ENCODE measurements at regions of chr13 and their contacts with region 1.

Region 1: GRCh38 chr13:31044377-31045285 is 112.2 kb downstream of the TEX26 start:
- DNase-seq: no peak
- H3K4me3 ChIP-seq: no peak overlapping the region
- CTCF ChIP-seq: peak; percentile 94

Region 2: DNA sequence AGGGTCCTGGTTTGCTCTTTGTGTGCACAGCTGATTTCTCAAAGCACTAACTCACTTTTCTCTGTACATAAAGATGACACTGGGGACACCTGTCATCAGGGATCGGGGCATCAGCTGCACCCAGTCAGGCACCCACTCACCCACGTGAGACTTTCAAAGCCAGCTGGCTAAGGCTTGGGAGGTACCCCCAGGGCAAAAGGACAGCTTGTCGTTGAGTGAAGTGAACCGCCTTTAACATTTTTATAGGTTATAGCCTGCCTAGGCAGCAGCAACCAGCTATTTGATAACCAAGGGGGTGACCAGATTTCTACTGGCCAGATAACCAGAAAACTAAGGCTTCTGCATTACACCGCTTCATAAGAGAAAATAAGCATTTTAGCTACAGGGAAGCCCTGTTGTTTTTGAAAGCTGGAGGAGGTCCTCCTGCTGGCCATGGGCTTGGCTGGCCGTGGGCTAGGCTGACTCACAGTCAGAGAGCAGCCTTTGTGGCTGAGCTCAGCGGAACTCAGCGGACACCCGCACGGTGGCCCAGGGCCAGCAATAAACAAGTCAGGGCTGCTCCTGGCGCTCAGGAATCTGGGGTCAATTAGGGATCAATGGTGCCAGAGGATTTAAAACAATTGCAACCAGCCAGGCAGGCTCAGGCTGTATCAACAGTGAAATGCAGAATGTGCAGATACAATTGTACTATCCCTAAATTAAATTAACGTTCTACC is 252.2 kb before region 1 on chr13:
- CTCF ChIA-PET with region 1: interaction called, 10 read pairs
- POLR2A ChIA-PET with region 1: no interaction called
- DNase-seq: peak; percentile 69
- H3K4me3 ChIP-seq: no peak overlapping the region
- CTCF ChIP-seq: peak; percentile 68

Region 3: DNA sequence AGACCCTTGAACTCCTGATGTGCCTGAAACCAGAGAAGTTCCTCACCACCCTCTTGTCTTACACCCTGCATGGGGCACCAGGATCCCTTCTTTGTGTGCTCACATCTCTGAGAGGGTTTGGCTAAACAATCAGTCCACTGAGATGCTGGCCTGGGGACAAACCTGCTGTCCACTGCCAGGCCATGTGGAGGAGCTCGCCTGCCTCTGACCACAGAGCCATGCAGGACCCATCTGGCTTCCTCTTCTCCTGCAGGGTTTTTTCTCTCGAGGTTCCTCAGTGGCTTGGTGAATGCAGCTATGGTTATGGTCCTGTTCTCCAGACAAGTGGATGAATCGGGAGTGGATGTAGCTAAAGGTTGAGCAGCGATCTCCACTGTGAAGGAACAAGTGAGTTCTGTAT is 187.6 kb before region 1 on chr13:
- CTCF ChIA-PET with region 1: interaction called, 10 read pairs
- POLR2A ChIA-PET with region 1: no interaction called
- DNase-seq: no peak
- H3K4me3 ChIP-seq: no peak overlapping the region
- CTCF ChIP-seq: peak; percentile 16

Region 4: DNA sequence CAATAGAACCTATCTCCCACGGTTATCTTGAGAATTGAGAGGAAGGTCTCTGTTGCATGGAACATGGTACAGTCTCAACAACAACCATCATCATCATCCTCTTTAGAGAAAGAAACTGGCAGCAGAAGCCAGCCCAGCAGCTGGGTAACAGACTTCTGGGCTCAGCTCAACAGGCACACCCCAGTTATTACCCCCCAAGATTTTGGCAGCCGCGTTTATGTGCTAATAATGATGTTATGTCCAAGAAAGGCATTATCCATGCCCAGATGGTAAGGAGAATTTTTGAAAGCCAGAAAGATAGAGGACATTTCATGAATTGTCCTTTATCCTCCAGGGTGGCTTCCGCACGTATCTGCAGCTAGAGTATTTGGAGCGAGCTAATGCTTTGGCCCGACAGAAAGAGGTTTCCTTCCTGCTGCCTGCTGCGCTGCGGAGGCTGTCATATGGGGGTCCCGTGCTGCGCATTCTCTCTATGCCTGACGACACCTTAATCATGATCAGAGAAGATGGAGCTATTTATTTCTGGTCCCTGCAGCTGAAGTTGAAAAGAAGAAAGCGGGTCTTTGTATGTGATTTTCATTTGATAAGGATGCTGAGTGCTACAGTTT is 22.2 kb before region 1 on chr13:
- CTCF ChIA-PET with region 1: interaction called, 87 read pairs
- POLR2A ChIA-PET with region 1: no interaction called
- DNase-seq: no peak
- H3K4me3 ChIP-seq: no peak overlapping the region
- CTCF ChIP-seq: no peak

Region 5: GRCh38 chr13:31064636-31065035 is 20.0 kb after region 1 on chr13:
- CTCF ChIA-PET with region 1: interaction called, 10 read pairs
- POLR2A ChIA-PET with region 1: no interaction called
- DNase-seq: no peak
- H3K4me3 ChIP-seq: no peak overlapping the region
- CTCF ChIP-seq: no peak

Region 6: GRCh38 chr13:31267126-31267784 is 222.6 kb after region 1 on chr13:
- CTCF ChIA-PET with region 1: no interaction called
- POLR2A ChIA-PET with region 1: no interaction called
- DNase-seq: no peak
- H3K4me3 ChIP-seq: no peak overlapping the region
- CTCF ChIP-seq: no peak

Measured in AG04449 (cell line).